ENCODE measurements at regions of chr4 and their contacts with region 1.

Region 1: GRCh38 chr4:156378033-156378665 is 424.5 kb upstream of the CTSO start:
- DNase-seq: peak; percentile 56
- H3K4me3 ChIP-seq: no peak overlapping the region
- H3K27ac ChIP-seq: no peak overlapping the region
- H3K4me1 ChIP-seq: no peaks in the 10 kb centered on the region
- H3K27me3 ChIP-seq: no peaks in the 10 kb centered on the region
- CTCF ChIP-seq: peak; percentile 29 to 54
- POLR2A ChIP-seq: no peak

Region 2: GRCh38 chr4:155403886-155404285 is 974.3 kb before region 1 on chr4:
- CTCF ChIA-PET with region 1: interaction called, 3 read pairs
- POLR2A ChIA-PET with region 1: no interaction called
- dilution Hi-C with region 1: no loop called
- intact Hi-C with region 1: loop called (anchors 5 kb)
- DNase-seq: peak; percentile 67
- H3K4me3 ChIP-seq: no peak overlapping the region
- H3K27ac ChIP-seq: no peak overlapping the region
- H3K4me1 ChIP-seq: no peaks in the 10 kb centered on the region
- H3K27me3 ChIP-seq: peaks cover 2 to 4% of the 10 kb centered on the region in 2 experiments
- CTCF ChIP-seq: peak; percentile 6 to 22
- POLR2A ChIP-seq: no peak

Region 3: DNA sequence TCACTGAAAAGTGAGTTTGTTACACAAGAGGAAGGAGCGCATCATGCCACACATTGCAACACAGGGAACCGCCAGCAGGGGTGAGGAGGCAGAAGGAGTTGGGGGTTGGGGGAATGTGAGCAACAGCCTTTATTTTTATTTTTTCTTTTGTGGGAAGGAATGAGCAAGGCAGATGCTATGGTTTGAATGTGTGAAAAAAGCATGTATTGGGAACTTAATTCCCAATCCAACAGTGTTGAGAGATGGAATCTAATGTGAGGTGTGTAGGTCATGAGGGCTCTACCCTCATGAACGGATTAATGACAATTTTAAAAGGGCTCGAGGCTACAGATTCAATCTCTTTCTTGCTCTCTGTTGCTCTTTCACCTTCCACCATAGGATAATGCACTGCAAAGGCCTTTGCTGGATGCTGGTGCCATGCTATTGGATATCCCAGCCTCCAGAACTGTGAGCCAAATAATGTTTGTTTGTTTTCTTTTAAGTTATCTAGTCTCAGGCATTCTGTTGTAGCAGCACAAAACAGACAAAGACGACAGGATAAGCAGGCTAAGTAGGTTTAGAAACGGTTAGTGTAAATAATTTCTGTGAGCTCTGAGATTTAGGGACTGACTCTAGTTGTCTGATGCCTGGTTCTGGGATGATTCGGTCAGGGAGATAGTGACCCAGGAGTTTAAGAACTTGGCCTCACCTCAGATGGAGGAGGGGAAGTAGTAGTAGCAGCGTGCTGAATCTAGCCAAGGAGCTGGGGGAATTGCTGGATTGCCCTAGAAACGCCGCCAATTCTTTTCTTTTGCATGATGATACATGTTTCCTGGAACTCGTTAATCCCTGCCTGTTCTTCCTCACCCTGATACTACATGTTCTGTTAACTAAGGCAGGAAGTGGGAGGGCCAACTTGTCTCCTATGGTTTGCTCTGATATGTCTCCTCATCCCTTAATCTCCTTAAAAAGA is 267.9 kb before region 1 on chr4:
- CTCF ChIA-PET with region 1: interaction called, 9 read pairs
- POLR2A ChIA-PET with region 1: no interaction called
- dilution Hi-C with region 1: no loop called
- intact Hi-C with region 1: loop called (anchors 5 kb)
- DNase-seq: peak; percentile 6
- H3K4me3 ChIP-seq: no peak overlapping the region
- H3K27ac ChIP-seq: no peak overlapping the region
- H3K4me1 ChIP-seq: no peaks in the 10 kb centered on the region
- H3K27me3 ChIP-seq: no peaks in the 10 kb centered on the region
- CTCF ChIP-seq: no peak
- POLR2A ChIP-seq: no peak

Region 4: GRCh38 chr4:156169011-156169410 is 209.1 kb before region 1 on chr4:
- CTCF ChIA-PET with region 1: interaction called, 16 read pairs
- POLR2A ChIA-PET with region 1: no interaction called
- dilution Hi-C with region 1: no loop called
- intact Hi-C with region 1: loop called (anchors 5 kb)
- DNase-seq: peak; percentile 42
- H3K4me3 ChIP-seq: no peak overlapping the region
- H3K27ac ChIP-seq: no peak overlapping the region
- H3K4me1 ChIP-seq: no peaks in the 10 kb centered on the region
- H3K27me3 ChIP-seq: no peaks in the 10 kb centered on the region
- CTCF ChIP-seq: peak; percentile 16 to 45
- POLR2A ChIP-seq: no peak

Measured in endothelial cell of umbilical vein (primary cell).